H1 (cell line): ENCODE measurements at regions of chr19 and their contacts with region 1.

Region 1: DNA sequence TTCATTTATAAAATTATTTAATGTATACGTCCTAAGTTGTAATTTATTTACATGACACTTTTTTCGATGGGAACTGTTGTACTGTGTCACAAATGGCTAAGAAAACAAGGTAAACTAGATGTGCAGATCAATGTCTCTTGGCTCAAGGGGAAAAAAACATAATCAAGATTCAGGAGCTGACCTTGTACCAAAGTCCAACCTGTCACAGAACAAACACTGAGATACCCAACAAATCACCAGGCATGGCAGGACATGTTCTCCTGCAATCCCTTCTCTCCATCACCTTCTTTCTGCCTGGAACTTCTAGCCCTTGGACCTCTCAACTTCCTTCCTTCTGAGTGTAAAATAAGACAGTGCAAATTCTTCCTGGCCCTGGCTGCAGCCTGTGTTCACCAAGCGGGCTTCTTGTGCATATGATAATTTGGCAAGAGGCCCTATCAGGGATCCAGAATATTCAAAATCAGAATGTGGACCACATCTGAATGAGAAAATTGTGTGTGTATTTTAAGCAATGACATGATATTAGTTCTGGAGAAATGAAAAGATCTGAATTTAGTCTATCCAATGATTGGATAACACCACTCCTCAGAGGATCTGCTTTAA is 445.9 kb downstream of the ZNF536 start:
- DNase-seq: no peak
- H3K4me3 ChIP-seq: no peak overlapping the region
- H3K27ac ChIP-seq: no peak overlapping the region
- H3K4me1 ChIP-seq: no peaks in the 10 kb centered on the region
- H3K27me3 ChIP-seq: no peaks in the 10 kb centered on the region
- CTCF ChIP-seq: no peak
- EP300 ChIP-seq: no peak
- POLR2A ChIP-seq: no peak
- RAD21 ChIP-seq: no peak

Region 2: GRCh38 chr19:30799865-30800755 is 18.0 kb before region 1 on chr19:
- CTCF ChIA-PET with region 1: interaction called, 43 read pairs
- POLR2A ChIA-PET with region 1: no interaction called
- DNase-seq: peak; percentile 27 to 90
- H3K4me3 ChIP-seq: no peak overlapping the region
- H3K27ac ChIP-seq: no peak overlapping the region
- H3K4me1 ChIP-seq: peaks cover 2 to 12% (median 6%) of the 10 kb centered on the region in 4 experiments; a peak in 6 of 7 replicates
- H3K27me3 ChIP-seq: peaks cover 0 to 6% (median 1%) of the 10 kb centered on the region in 4 experiments; a peak in 2 of 7 replicates
- CTCF ChIP-seq: peak; percentile 77 to 93 (median 93)
- EP300 ChIP-seq: no peak
- POLR2A ChIP-seq: no peak
- RAD21 ChIP-seq: peak; percentile 71 to 75